HAP-1 (cell line): ENCODE measurements at regions of chr3 and their contacts with region 1.

Region 1: DNA sequence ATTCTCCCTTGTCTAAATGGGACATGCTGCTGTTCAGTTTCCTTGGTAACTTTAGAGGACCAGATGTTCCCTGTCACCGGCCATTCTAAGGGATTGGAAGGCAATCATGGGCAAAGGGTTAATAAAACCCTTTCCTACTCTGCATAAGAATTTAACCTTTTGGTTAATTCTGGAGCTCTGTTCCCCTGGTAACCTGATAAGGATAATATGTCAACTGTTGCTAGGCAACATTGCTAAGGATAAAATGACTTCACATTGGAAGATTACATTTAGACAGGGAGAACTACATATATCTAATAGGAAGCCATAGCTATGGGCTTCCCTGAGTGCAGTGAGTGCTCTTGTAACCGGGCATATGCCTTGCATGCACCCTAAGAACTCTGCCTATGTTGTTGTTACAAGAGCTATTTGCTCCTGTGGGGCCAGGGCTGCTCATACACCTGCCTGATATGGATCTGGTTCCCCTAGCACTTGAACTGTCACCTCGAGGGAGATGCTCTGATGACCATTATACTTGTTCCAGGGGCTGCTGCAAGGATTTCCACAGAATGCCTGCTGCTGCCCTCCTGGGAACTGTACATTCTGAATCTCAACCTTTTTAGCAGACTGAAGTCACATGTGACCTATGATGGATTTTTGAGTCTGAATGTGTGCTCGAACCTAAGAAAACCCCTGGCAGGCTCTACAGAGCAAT is 326.3 kb upstream of the PDZRN3 start:
- DNase-seq: peak; percentile 62 to 91
- H3K4me3 ChIP-seq: no peak overlapping the region
- H3K4me1 ChIP-seq: peaks cover 39% of the 10 kb centered on the region
- H3K27me3 ChIP-seq: no peaks in the 10 kb centered on the region

Region 2: GRCh38 chr3:73884361-73884760 is 66.7 kb before region 1 on chr3:
- in situ Hi-C with region 1: loop called (anchors 10 kb)
- DNase-seq: no peak
- H3K4me3 ChIP-seq: no peak overlapping the region
- H3K4me1 ChIP-seq: peaks cover 28% of the 10 kb centered on the region
- H3K27me3 ChIP-seq: no peaks in the 10 kb centered on the region